Endothelial cell of umbilical vein (primary cell): ENCODE measurements at regions of chr15 and their contacts with region 1.

Region 1: GRCh38 chr15:69081310-69082004 is 67.0 kb downstream of the NOX5 start:
- DNase-seq: peak; percentile 80
- H3K4me3 ChIP-seq: peak overlapping the region in 1 of 3 experiments; percentile 14
- H3K27ac ChIP-seq: peak overlapping the region; percentile 95
- H3K4me1 ChIP-seq: peaks cover 34% of the 10 kb centered on the region
- H3K27me3 ChIP-seq: no peaks in the 10 kb centered on the region
- CTCF ChIP-seq: no peak
- POLR2A ChIP-seq: peak; percentile 37

Region 2: GRCh38 chr15:68559345-68560310 is 521.8 kb before region 1 on chr15:
- CTCF ChIA-PET with region 1: no interaction called
- POLR2A ChIA-PET with region 1: no interaction called
- dilution Hi-C with region 1: no loop called
- intact Hi-C with region 1: no loop called
- DNase-seq: peak; percentile 78
- H3K4me3 ChIP-seq: peak overlapping the region in 2 of 3 experiments; percentile 19 to 46
- H3K27ac ChIP-seq: no peak overlapping the region
- H3K4me1 ChIP-seq: peaks cover 4% of the 10 kb centered on the region
- H3K27me3 ChIP-seq: peaks cover 4 to 7% of the 10 kb centered on the region in 2 experiments
- CTCF ChIP-seq: peak; percentile 98 to 99
- POLR2A ChIP-seq: no peak

Region 3: DNA sequence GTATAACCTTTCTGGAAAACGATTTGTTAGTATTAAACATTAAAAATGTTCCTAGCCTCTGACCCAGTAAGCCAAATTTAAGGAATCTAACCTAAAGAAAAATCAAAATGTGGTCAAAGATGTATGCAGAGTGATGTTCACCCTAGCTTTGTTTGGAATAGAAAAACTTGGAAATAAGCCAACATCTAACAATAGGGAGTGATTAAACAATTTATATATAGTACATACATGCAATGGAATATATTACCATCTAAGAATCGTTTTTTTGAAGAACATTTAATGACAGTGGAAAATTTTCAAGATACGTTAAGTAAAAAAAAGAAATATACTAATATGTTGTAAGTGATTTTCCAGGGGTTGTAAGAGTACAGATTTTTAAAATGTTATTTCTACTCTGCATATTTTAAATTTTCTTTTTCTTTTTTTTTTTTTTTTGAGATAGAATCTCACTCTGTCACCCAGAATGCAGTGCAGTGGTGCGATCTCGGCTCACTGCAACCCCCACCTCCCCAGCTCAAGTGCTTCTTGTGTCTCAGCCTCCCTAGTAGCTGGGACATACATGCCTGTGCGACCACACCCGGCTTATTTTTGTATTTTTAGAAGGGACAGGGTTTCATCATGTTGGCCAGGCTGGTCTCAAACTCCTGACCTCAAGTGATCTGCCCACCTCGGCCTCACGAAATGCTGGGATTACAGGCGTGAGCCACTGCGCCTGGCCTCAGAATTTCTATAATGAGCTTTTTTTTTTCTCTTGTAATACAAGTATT is 315.7 kb before region 1 on chr15:
- CTCF ChIA-PET with region 1: no interaction called
- POLR2A ChIA-PET with region 1: no interaction called
- dilution Hi-C with region 1: no loop called
- intact Hi-C with region 1: loop called (anchors 5 kb)
- DNase-seq: peak; percentile 80
- H3K4me3 ChIP-seq: no peak overlapping the region
- H3K27ac ChIP-seq: peak overlapping the region; percentile 35
- H3K4me1 ChIP-seq: peaks cover 52% of the 10 kb centered on the region
- H3K27me3 ChIP-seq: no peaks in the 10 kb centered on the region
- CTCF ChIP-seq: no peak
- POLR2A ChIP-seq: no peak

Region 4: DNA sequence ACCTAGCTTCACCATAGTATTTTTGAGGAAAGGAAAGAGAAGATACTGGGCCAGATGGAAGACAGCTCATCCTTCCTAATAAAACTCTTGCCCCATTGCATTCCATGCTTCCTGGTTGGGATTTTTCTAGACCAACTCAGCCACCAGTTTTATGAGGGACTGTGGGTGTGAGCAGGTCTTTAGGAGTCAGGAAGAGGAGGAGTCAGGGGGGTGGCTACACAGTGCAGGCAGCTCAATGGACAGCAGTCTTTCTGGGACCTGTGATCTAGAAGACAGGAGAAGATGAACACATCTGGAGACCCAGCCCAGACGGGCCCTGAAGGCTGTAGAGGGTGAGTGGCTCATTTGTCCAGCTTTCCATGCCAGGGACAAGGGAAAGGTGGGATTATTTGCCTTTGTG is 67.0 kb before region 1 on chr15 and contains the start of gene NOX5:
- CTCF ChIA-PET with region 1: no interaction called
- POLR2A ChIA-PET with region 1: no interaction called
- dilution Hi-C with region 1: no loop called
- intact Hi-C with region 1: no loop called
- DNase-seq: no peak
- H3K4me3 ChIP-seq: no peak within 1 kb of the TSS
- H3K27ac ChIP-seq: no peak within 1 kb of the TSS
- H3K4me1 ChIP-seq: no peaks in the 10 kb centered on the region
- H3K27me3 ChIP-seq: peaks cover 3% of the 10 kb centered on the region in 2 experiments
- CTCF ChIP-seq: no peak
- POLR2A ChIP-seq: no peak
- total RNA-seq, gene NOX5: 0.07 TPM in 1 of 2 replicates, not detected in the other

Region 5: GRCh38 chr15:69093127-69094013 is 11.9 kb after region 1 on chr15:
- CTCF ChIA-PET with region 1: interaction called, 18 read pairs
- POLR2A ChIA-PET with region 1: no interaction called
- dilution Hi-C with region 1: no loop called
- intact Hi-C with region 1: loop called (anchors 1 kb)
- DNase-seq: peak; percentile 57
- H3K4me3 ChIP-seq: no peak overlapping the region
- H3K27ac ChIP-seq: no peak overlapping the region
- H3K4me1 ChIP-seq: peaks cover 29% of the 10 kb centered on the region
- H3K27me3 ChIP-seq: no peaks in the 10 kb centered on the region
- CTCF ChIP-seq: no peak
- POLR2A ChIP-seq: no peak